IMR-90 (cell line): ENCODE measurements at regions of chr18 and their contacts with region 1.

Region 1: DNA sequence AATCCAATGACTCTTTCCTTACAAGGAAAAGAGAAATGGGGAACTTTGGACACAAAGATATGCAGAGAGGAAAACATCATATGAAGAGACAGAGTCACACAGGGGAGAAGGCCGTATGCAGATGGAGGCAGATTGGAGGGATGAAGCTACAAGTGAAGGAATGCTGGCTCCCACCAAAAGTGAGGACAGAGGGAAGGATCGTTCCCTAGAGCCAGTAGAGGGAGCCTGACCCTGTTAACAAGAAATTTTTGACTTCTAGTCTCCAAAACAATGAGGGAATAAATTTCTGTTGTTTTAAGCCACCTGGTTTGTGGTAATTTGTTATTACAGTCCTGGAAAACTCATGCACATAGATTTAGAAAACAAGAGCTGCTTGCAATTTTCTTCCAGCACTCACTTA is 169.3 kb downstream of the PMAIP1 start:
- DNase-seq: no peak
- ATAC-seq: no peak
- H3K4me3 ChIP-seq: no peak overlapping the region
- H3K27ac ChIP-seq: no peak overlapping the region
- H3K4me1 ChIP-seq: peaks cover 1% of the 10 kb centered on the region; the same call in 1 of the 2 replicates
- H3K27me3 ChIP-seq: 0 out of 2 replicates have a peak, but pooled peaks cover 1% of the 10 kb centered on the region
- CTCF ChIP-seq: no peak
- POLR2A ChIP-seq: no peak
- RAD21 ChIP-seq: no peak

Region 2: DNA sequence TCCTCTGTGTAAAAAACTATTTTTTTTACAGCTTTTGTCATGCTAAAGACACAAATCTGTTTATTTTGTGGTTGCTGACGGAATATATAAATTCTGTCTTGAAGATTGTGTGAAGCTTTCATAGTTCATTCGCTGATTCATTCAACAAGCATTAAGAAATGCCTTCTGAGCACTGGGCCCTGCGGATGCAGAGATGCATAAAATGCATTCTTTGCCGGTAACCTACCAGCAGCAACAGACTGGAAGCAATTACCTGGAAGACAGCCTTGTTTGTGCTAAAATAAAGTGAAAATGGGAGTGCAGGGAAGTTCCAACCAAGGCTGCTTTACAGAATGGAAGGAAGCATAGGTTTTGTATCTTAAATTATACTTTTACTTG is 49.7 kb before region 1 on chr18:
- CTCF ChIA-PET with region 1: no interaction called
- POLR2A ChIA-PET with region 1: no interaction called
- dilution Hi-C with region 1: no loop called
- in situ Hi-C with region 1: no loop called
- intact Hi-C with region 1: loop called (anchors 10 kb)
- DNase-seq: peak; percentile 87
- ATAC-seq: peak; percentile 82
- H3K4me3 ChIP-seq: no peak overlapping the region
- H3K27ac ChIP-seq: no peak overlapping the region
- H3K4me1 ChIP-seq: peaks cover 11% of the 10 kb centered on the region
- H3K27me3 ChIP-seq: no peaks in the 10 kb centered on the region
- CTCF ChIP-seq: no peak
- POLR2A ChIP-seq: no peak
- RAD21 ChIP-seq: no peak

Region 3: GRCh38 chr18:60090170-60090569 is 21.0 kb after region 1 on chr18:
- CTCF ChIA-PET with region 1: no interaction called
- POLR2A ChIA-PET with region 1: no interaction called
- dilution Hi-C with region 1: no loop called
- in situ Hi-C with region 1: no loop called
- intact Hi-C with region 1: no loop called
- DNase-seq: no peak
- ATAC-seq: no peak
- H3K4me3 ChIP-seq: no peak overlapping the region
- H3K27ac ChIP-seq: no peak overlapping the region
- H3K4me1 ChIP-seq: no peaks in the 10 kb centered on the region
- H3K27me3 ChIP-seq: peaks cover 5% of the 10 kb centered on the region
- CTCF ChIP-seq: no peak
- POLR2A ChIP-seq: no peak
- RAD21 ChIP-seq: no peak

Region 4: GRCh38 chr18:60110836-60111235 is 41.7 kb after region 1 on chr18:
- CTCF ChIA-PET with region 1: no interaction called
- POLR2A ChIA-PET with region 1: no interaction called
- dilution Hi-C with region 1: no loop called
- in situ Hi-C with region 1: no loop called
- intact Hi-C with region 1: no loop called
- DNase-seq: no peak
- ATAC-seq: no peak
- H3K4me3 ChIP-seq: no peak overlapping the region
- H3K27ac ChIP-seq: no peak overlapping the region
- H3K4me1 ChIP-seq: no peaks in the 10 kb centered on the region
- H3K27me3 ChIP-seq: peaks cover 1% of the 10 kb centered on the region; the same call in 1 of the 2 replicates
- CTCF ChIP-seq: no peak
- POLR2A ChIP-seq: no peak
- RAD21 ChIP-seq: no peak